Ascending aorta (tissue), 2 donors: ENCODE measurements at regions of chr9 and their contacts with region 1.

Region 1: GRCh38 chr9:101398068-101398929 is at the starts of genes MRPL50 and ZNF189:
- DNase-seq: peak; percentile 98 to 99
- H3K4me3 ChIP-seq: peak within 1 kb of the TSS; percentile 67 to 91
- H3K27ac ChIP-seq: peak within 1 kb of the TSS; percentile 77
- H3K4me1 ChIP-seq: peaks cover 0 to 15% of the 10 kb centered on the region in 2 donors
- H3K27me3 ChIP-seq: no peaks in the 10 kb centered on the region
- CTCF ChIP-seq: no peak
- total RNA-seq, gene MRPL50: 2.6 TPM
- total RNA-seq, gene ZNF189: 30.4 TPM

Region 2: DNA sequence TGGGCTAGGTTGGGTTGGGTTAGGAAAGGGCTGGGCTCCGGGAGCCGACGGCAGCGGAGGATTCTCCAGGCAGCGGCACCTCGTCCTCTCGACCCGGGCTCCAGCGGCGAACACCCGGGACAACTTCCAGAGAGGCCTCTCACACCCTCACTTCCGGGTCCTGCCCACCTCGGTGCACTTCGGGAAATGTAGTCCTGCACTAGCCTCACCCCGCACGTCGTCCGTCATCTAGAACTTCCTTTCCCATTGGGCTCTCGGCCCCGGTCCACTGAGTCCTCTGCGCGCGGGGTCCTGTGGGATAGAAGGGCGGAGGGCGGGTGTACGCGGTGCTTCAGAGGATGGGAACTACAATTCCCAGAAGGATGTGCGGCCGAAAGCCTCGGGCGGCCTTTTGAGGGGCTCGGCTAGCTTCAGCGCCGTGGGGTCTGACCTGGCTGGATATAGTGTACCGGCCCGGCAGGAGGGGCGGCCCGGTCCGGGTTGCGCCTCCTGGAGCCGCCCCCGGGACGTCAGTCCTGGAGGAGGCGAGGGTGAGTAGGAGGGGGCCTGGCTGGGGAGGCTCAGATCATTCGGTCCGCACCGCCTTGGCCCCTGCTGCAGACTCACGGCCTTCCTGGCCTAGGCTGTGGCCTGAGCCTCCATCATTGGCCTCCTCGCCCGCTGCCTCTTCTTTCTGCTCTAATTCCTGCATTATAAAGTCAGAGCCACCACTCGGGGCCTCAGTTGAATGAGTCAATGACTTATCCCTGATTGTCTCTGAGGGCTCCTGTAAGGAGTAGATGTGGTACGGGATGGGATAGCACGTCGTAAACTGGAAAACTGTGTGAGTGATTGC is 1299.2 kb before region 1 on chr9 and contains the starts of genes ERP44 and INVS:
- intact Hi-C with region 1: loop called (anchors 2 kb)
- DNase-seq: peak; percentile 98 to 100
- H3K4me3 ChIP-seq: peak within 1 kb of the TSS; percentile 62 to 77
- H3K27ac ChIP-seq: peak within 1 kb of the TSS; percentile 79 to 81
- H3K4me1 ChIP-seq: peaks cover 0 to 16% of the 10 kb centered on the region in 2 donors
- H3K27me3 ChIP-seq: no peaks in the 10 kb centered on the region
- CTCF ChIP-seq: no peak
- total RNA-seq, gene ERP44: 10.7 TPM
- total RNA-seq, gene INVS: 8.5 TPM

Region 3: DNA sequence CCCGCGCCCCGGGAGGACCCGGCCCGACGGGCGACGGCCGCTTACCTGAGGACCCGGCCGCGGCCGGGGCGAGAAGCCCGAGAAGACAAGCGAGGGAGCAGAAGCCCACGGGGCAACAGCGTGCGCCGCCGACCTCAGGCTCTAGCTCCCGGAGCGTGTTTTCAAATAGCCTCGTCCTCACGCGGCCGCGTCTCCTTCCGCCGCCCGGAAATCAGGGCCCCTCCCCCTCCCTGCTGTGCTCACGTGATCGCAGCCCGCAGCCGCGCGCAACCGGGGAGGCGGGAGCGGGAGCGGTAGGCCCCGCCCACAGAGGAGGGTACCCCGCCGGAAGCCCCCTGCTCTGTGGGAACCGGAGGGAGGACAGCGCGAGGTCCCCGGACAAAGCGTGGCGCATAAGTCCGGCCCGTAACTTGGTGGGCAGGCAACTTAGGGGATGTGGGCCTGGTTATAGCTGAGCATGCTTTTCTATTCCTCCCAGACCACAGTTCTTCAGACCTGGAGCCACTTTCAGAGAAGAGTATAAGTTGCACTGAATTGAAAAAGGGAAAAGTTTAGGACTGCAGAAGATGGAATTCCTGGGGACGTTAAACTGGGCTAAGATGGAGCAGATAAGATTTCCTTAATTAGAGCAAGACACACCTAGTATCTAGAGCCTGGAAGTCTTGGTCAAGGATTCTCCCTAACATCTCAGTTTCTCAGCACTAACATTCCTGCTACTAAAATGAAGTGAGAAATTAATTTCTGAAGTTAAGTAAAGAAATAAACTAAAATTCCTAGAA is 1045.4 kb before region 1 on chr9 and contains the start of gene TEX10:
- intact Hi-C with region 1: loop called (anchors 5 kb)
- DNase-seq: peak; percentile 18 to 93
- H3K4me3 ChIP-seq: peak within 1 kb of the TSS; percentile 97
- H3K27ac ChIP-seq: peak within 1 kb of the TSS; percentile 78 to 85
- H3K4me1 ChIP-seq: peaks cover 3% of the 10 kb centered on the region in 2 donors
- H3K27me3 ChIP-seq: no peaks in the 10 kb centered on the region
- CTCF ChIP-seq: no peak
- total RNA-seq, gene TEX10: 2.3 TPM

Region 4: GRCh38 chr9:100426530-100427428 is 971.5 kb before region 1 on chr9 and contains the start of gene MSANTD3:
- intact Hi-C with region 1: loop called (anchors 5 kb)
- DNase-seq: peak in 1 of 2 donors; percentile 78
- H3K4me3 ChIP-seq: peak within 1 kb of the TSS; percentile 91 to 99
- H3K27ac ChIP-seq: peak within 1 kb of the TSS; percentile 89 to 94
- H3K4me1 ChIP-seq: peaks cover 0 to 26% of the 10 kb centered on the region in 2 donors
- H3K27me3 ChIP-seq: no peaks in the 10 kb centered on the region
- CTCF ChIP-seq: peak in 1 of 3 experiments; percentile 60
- total RNA-seq, gene MSANTD3: 2.8 TPM

Region 5: DNA sequence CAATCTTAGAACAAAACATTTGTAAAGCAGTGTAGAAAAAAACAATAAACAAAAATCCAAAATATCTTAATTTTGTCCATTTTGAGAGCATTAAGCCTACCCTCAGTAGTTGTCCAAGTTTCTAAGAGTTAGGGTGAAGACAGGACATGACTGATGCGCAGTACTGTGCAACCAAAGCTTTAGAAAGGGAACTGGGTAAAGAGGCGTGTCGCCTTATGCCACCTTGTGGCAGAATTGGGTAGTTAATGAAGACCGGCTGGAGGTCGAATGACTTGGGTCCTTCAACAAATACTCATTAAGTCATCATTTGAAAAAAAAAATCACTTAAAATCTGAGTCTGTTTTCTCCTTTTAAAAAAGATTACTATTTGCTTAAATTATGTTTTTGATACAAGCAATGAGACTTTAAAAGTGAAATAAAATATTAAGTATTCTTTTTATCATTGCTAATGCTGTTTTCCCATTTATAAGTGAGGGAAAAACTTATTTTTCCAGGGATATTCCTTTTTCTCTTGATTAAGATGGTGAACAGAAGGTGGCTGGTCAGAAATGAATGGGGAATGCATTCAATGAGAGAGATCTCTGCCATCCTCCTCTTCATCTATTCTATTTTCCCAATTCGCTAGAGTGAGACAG is 131.9 kb after region 1 on chr9:
- intact Hi-C with region 1: loop called (anchors 1 kb)
- DNase-seq: peak in 1 of 2 donors; percentile 85
- H3K4me3 ChIP-seq: no peak overlapping the region
- H3K27ac ChIP-seq: no peak overlapping the region
- H3K4me1 ChIP-seq: peaks cover 0 to 7% of the 10 kb centered on the region in 2 donors
- H3K27me3 ChIP-seq: no peaks in the 10 kb centered on the region
- CTCF ChIP-seq: peak; percentile 59 to 84 (median 75)

Region 6: DNA sequence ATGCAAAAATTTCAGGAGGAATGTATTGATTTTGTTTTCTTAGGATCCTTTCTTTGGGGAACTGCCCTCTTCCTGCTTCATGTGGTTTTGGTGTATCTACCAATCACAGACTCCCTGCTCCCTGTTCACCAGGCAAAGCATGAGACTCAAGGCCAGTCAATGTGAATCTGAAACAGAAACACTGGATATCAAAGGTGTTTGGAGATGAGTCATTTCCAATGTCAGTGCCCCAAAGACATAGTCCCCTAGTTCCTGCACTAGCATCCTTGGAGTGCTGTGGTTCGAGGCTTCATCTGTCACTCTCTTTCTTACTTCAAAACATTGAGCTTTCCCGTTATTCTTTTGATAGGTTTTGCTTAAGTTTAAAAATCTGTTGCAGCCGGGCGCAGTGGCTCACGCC is 188.4 kb after region 1 on chr9:
- intact Hi-C with region 1: no loop called
- DNase-seq: no peak
- H3K4me3 ChIP-seq: no peak overlapping the region
- H3K27ac ChIP-seq: no peak overlapping the region
- H3K4me1 ChIP-seq: no peaks in the 10 kb centered on the region
- H3K27me3 ChIP-seq: no peaks in the 10 kb centered on the region
- CTCF ChIP-seq: no peak